Pancreas (tissue), 10 donors: ENCODE measurements at regions of chr9 and their contacts with region 1.

Region 1: DNA sequence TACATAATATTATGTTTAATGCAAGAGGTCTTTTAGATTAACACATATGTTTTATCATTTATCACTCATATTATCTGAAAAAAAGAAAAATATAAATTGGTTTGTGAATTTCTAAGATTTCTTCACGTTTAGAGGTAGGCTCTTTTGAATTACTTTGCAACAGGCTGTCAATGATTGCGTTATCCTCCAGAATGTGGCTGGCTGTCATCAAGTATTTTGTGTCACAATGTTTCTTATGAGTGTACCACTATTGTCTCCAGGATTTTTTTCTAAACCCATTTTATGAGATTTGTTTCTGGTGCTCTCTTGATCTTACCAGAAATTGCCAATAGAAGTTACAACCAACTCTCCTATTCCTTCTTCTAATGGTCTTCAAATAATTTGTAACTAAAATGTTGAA is 307.9 kb downstream of the DMAC1 start:
- DNase-seq: no peak
- ATAC-seq: no peak
- H3K4me3 ChIP-seq: no peak overlapping the region
- H3K27ac ChIP-seq: no peak overlapping the region
- H3K4me1 ChIP-seq: no peaks in the 10 kb centered on the region
- H3K27me3 ChIP-seq: no peaks in the 10 kb centered on the region
- CTCF ChIP-seq: no peak

Region 2: DNA sequence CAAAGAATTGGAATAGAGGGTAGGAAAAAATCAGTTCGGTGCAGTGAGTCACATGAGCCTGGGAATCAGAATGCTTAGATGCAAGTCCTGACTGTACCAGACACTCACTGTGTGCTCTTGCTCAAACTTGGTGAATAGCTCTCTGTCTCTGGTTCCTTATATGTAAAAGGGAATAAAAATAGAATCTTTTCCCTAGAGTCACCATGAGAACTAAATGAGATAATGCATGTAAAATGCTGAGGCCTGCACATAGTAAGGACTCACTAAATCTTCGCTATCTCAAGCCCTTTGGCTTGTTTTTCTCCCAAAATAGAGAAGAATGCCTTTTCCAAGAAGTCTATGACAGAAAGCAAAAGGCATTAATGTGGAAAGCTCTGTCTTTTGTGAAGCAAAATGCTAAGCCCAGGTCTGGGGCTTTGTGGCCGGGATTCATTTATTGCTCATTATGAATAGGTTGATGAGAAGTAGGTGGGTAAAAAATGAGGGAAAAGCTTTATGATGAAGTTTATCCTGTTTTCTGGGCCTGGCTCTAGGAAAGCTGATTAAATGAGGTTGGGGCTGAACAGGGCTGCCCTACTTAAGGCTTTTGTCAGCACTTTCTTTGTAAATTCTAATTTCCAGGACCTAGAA is 175.4 kb before region 1 on chr9:
- intact Hi-C with region 1: loop called in 1 of 3 experiments (anchors 10 kb)
- DNase-seq: no peak
- ATAC-seq: peak in 3 of 4 donors; percentile 19 to 65 (median 58)
- H3K4me3 ChIP-seq: no peak overlapping the region
- H3K27ac ChIP-seq: no peak overlapping the region
- H3K4me1 ChIP-seq: peaks cover 0 to 5% (median 0%) of the 10 kb centered on the region in 3 donors
- H3K27me3 ChIP-seq: no peaks in the 10 kb centered on the region
- CTCF ChIP-seq: no peak

Region 3: DNA sequence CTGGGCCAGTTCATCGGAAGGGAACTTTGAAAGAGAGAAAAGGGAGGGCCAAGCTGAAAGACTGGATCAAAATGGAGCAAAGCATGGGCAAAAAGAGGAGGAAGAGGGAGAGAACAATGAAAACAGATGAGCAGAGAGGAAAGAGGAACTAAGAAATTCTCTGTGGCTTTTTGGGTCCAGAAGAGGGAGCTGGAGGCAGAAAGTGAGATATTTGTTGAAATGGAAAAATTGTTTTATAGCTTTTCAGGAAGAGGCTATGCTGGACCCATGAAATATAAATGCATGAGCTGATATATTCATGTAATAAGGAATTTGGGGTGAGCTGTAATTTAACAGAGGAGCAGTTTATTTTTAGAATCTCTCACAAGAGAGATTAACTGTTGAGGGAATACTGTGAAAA is 149.4 kb before region 1 on chr9:
- intact Hi-C with region 1: no loop called
- DNase-seq: no peak
- ATAC-seq: no peak
- H3K4me3 ChIP-seq: no peak overlapping the region
- H3K27ac ChIP-seq: no peak overlapping the region
- H3K4me1 ChIP-seq: no peaks in the 10 kb centered on the region
- H3K27me3 ChIP-seq: no peaks in the 10 kb centered on the region
- CTCF ChIP-seq: no peak